ENCODE measurements at regions of chr22 and their contacts with region 1.

Region 1: GRCh38 chr22:38056969-38057891 is at the start of gene PICK1:
- DNase-seq: peak; percentile 97
- H3K4me3 ChIP-seq: peak within 1 kb of the TSS; percentile 62 to 84 (median 68)
- H3K27ac ChIP-seq: peak within 1 kb of the TSS; percentile 81 to 90 (median 84)
- H3K4me1 ChIP-seq: peaks cover 18 to 28% (median 23%) of the 10 kb centered on the region in 4 donors
- H3K27me3 ChIP-seq: peaks cover 0 to 8% (median 0%) of the 10 kb centered on the region in 4 donors
- CTCF ChIP-seq: no peak
- EP300 ChIP-seq: no peak
- POLR2A ChIP-seq: no peak
- total RNA-seq, gene PICK1: 23.3 to 36.1 (median 31.1) TPM

Region 2: DNA sequence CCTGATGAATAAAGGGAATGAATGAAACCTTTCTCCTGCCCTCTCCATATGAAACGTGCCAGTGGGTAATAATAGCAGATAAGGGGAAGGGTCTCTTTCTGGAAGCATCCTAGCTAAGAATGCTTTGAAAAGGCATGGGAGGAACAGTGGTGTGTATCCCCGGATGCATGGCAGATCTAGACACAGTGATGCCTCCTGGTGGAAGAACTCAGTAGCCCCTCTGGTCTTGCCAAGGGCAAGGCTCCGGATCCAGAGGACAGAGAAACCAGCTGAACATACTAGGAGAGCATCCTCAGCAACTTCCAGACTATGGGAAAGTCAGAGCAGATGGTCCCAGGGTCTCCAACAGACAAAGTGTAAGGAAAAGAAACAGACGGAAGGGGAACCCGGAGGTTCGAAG is 46.9 kb after region 1 on chr22:
- intact Hi-C with region 1: loop called (anchors 5 kb)
- DNase-seq: no peak
- H3K4me3 ChIP-seq: no peak overlapping the region
- H3K27ac ChIP-seq: no peak overlapping the region
- H3K4me1 ChIP-seq: peaks cover 0 to 9% (median 2%) of the 10 kb centered on the region in 4 donors
- H3K27me3 ChIP-seq: no peaks in the 10 kb centered on the region
- CTCF ChIP-seq: peak; percentile 30 to 52 (median 51)
- EP300 ChIP-seq: no peak
- POLR2A ChIP-seq: no peak